ENCODE measurements at regions of chr16 and their contacts with region 1.

Region 1: DNA sequence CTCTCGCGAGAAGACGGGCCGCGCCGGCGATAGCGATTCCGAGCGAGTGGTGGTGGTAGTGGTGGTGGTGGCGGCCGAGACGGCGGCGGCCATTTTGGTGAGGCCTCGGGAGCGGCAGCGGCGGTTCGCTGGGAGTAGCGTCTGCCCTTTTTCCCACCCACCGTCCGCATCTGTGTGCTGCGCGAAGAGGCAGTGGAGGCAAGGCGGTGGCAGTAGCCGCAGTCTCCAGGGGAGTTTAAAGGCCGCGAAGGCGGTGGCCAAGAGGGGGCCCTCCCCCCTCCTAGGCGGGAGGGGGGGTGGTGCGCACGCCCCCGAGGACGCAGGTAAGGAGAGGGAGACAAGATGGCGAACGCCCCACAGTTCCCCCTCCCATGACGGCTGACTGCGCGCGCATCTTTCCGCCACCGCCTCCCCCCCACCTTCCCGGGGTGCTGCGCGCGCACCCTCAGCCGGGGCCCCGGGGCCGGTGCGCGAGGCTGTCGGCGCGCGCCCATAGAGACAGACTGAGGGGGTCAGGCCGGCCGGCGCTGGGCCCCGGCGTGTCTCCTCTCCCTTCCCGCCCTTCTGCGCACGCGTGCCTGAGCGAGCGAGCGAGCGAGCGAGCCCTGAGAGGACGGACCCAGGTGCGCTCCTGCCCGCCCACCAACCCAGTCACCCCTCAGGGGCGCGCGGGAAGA is 694 bp upstream of the SRCAP start:
- DNase-seq: peak; percentile 100
- H3K4me3 Mint-ChIP-seq: peak overlapping the region; percentile 94
- H3K27ac Mint-ChIP-seq: peak overlapping the region; percentile 99
- H3K4me1 Mint-ChIP-seq: peaks cover 37% of the 10 kb centered on the region
- H3K27me3 Mint-ChIP-seq: no peaks in the 10 kb centered on the region

Region 2: DNA sequence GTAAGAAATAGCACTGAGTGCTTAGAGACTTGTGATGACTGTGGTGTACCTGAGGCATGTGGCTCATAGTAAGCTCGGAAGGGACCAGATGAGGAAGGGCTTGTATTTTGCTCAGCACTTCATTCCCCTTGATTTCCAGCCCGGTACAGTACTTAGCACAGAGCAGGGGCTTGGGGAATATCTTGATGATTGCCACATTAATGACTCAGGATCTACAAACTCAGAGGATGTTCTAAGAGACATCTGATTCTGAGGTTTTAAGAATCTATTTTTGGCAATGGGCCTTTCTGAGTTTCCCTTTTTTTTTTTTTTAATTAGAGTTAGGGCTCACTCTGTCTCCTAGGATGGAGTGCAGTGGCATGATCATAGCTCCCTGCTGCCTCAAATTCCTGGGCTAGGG is 788.9 kb before region 1 on chr16:
- CTCF ChIA-PET with region 1: no interaction called
- intact Hi-C with region 1: no loop called
- DNase-seq: no peak
- H3K4me3 Mint-ChIP-seq: no peak overlapping the region
- H3K27ac Mint-ChIP-seq: no peak overlapping the region
- H3K4me1 Mint-ChIP-seq: no peaks in the 10 kb centered on the region
- H3K27me3 Mint-ChIP-seq: no peaks in the 10 kb centered on the region

Region 3: DNA sequence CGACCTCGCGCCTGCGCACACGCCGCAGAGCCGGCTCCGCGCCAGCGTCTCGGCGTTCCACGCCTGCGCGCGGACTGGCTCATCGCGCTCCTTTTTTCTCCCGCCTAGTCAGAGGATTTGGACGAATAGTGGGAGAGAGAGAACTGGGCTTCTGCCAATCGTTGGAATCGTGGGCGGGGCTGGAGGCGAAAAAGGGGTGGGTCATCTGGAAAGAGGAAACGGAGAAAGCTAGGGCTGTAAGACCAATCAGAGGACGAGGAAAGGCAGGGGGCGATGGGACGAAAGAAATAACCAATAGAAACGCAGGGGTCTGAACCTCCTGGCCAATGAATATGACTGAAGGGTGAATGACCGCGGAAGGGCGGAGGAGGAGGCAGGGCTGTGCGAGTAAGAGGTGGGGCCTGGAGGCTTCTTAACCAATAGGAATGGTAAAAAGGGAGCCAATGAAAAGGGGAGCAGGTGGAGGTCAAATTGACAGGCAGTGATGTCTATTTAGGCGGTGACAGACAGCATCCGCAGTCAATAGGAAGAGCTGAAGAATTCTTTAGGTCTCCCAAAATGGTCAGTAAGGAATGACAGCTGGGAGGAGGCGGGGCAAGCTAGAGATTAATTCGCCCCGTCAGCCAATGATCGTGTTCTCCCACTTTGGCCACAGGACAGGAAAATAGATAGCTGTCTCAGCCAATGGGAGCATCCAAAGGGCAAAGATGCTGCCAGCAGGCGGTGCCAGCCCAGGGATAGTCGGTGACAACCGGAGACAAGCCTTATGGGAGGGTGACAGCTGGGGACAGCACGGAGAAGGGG is 327.6 kb before region 1 on chr16 and contains the start of gene TBC1D10B:
- CTCF ChIA-PET with region 1: no interaction called
- intact Hi-C with region 1: loop called (anchors 2 kb)
- DNase-seq: peak; percentile 100
- H3K4me3 Mint-ChIP-seq: peak within 1 kb of the TSS; percentile 94
- H3K27ac Mint-ChIP-seq: peak within 1 kb of the TSS; percentile 98
- H3K4me1 Mint-ChIP-seq: peaks cover 40% of the 10 kb centered on the region
- H3K27me3 Mint-ChIP-seq: no peaks in the 10 kb centered on the region
- total RNA-seq, gene TBC1D10B: 36.6 to 38.4 TPM

Region 4: DNA sequence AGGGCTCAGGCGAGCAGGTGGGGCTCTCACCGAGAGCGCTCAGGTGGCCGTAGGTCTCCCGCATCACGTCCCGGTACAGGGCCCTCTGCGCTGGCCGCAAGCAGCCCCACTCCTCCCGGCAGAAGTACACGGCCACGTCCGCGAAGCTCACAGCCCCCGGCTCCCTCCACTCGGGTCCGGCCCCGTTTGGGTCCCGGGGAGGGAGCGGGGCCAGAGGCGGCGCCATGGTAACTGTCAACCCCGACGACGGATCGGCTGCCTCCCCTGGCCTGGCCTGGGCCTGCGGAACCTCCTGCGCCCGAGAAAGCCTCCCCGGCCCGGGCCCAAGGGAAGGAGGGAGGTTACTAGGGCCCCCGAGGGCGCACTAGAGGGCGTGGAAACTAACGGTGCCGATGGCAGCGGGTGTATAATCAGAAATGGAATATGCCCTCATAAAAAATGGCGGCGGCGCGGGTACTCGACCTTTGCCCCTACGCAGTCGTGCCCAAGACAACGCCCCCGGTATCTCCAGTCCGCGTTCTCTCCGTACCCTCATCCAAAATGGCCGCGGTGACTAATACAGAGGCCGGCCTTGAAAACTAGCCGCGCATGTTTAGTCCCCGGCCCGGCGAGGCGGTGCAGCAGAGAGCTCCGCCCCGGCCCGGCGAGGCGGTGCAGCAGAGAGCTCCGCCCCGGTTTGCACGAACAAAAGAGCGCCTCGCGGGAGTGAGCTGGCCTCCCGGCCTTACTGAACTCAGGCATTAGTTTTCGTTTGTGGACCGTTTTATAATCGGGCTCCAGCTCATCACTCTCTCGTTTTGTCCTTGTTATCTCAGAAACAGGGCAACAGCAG is 140.1 kb before region 1 on chr16 and contains the start of gene ZNF764:
- CTCF ChIA-PET with region 1: interaction called, 6 read pairs
- intact Hi-C with region 1: loop called (anchors 10 kb)
- DNase-seq: peak; percentile 99
- H3K4me3 Mint-ChIP-seq: peak within 1 kb of the TSS; percentile 84
- H3K27ac Mint-ChIP-seq: peak within 1 kb of the TSS; percentile 90
- H3K4me1 Mint-ChIP-seq: peaks cover 34% of the 10 kb centered on the region
- H3K27me3 Mint-ChIP-seq: no peaks in the 10 kb centered on the region
- total RNA-seq, gene ZNF764: 7.6 to 9.5 TPM

Region 5: DNA sequence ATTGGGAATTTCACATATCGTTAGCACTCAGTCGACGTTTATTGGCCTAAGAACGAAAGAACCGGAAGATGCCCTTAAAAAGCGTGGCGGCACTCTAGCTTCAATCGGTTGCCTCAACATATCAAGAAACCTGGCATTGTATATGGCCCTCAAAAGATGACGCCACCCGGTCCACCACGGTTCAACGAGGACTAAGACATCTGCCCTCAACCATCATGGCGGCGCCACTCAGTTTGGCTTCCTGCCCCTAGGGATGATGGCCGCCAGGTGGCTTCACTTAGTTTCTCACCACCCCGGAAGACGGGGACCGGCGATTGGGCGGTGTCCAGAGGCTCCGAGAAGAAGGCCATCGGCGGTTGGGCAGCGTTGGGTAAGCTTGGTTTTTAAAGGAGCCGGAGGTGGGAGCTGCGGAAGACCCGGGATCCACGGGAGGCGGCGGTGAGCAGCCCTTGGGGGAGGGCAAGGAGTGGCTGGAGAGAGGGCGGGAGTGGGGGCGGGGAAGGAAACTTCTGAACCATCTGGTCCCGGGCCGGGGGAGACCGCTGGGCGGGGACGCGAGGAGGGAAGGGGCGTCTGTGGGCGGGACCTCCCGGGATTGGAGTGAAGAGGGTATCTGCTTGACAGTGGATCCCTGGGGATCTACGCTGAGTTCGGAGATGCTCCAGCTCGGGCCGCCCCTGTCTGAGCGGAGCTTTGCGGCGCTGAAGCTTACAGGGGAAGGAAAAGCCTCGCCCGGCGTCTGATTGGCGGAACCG is 47.7 kb before region 1 on chr16 and contains the start of gene PRR14:
- CTCF ChIA-PET with region 1: interaction called, 17 read pairs
- intact Hi-C with region 1: loop called (anchors 1 kb)
- DNase-seq: peak; percentile 100
- H3K4me3 Mint-ChIP-seq: peak within 1 kb of the TSS; percentile 85
- H3K27ac Mint-ChIP-seq: peak within 1 kb of the TSS; percentile 91
- H3K4me1 Mint-ChIP-seq: peaks cover 22% of the 10 kb centered on the region
- H3K27me3 Mint-ChIP-seq: no peaks in the 10 kb centered on the region
- total RNA-seq, gene PRR14: 50.6 to 52.4 TPM

Region 6: DNA sequence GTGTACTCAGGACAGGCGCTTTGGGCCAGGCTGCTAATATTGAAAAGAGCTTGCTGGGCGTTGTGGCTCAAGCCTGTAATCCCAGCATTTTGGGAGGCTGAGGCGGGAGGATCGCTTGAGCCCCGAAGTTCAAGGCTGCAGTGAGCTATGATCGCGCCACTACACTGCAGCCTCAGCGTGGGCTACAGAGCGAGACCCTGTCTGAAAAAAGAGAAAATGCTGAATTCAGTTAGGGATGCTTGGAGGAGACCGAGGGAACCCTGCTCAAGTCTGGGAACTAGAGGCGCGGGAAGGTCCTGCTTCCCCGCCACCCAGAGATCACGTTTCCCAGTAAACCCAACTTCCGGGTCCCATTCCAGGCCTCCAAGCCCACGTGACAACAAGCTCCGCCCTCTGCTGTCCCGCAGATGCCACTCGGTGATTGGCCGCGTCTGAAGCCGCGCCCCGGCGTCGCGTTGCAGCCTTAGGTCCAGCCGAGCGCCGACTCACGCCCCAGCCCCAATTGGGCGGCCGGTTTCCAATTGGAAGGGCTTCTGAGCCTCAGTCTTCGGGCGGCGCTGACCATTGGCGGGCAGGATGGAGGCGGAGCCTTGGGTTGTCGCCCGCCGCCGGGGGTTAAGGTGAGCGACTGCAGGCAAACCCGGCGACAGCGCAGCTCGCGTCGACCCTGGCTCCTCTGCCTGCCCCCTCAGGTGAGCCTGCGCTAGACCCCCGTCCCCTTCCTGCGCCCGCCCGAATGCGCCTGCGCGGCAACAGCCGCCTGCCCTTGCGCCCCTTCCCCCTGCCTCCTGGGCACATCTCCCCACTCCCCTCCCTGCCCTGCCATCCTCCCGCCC is 49.7 kb after region 1 on chr16 and contains the start of gene PHKG2:
- CTCF ChIA-PET with region 1: no interaction called
- intact Hi-C with region 1: loop called (anchors 1 kb)
- DNase-seq: peak; percentile 99
- H3K4me3 Mint-ChIP-seq: peak within 1 kb of the TSS; percentile 89
- H3K27ac Mint-ChIP-seq: peak within 1 kb of the TSS; percentile 86
- H3K4me1 Mint-ChIP-seq: peaks cover 19% of the 10 kb centered on the region
- H3K27me3 Mint-ChIP-seq: no peaks in the 10 kb centered on the region
- total RNA-seq, gene PHKG2: 23.3 to 26.4 TPM

Region 7: DNA sequence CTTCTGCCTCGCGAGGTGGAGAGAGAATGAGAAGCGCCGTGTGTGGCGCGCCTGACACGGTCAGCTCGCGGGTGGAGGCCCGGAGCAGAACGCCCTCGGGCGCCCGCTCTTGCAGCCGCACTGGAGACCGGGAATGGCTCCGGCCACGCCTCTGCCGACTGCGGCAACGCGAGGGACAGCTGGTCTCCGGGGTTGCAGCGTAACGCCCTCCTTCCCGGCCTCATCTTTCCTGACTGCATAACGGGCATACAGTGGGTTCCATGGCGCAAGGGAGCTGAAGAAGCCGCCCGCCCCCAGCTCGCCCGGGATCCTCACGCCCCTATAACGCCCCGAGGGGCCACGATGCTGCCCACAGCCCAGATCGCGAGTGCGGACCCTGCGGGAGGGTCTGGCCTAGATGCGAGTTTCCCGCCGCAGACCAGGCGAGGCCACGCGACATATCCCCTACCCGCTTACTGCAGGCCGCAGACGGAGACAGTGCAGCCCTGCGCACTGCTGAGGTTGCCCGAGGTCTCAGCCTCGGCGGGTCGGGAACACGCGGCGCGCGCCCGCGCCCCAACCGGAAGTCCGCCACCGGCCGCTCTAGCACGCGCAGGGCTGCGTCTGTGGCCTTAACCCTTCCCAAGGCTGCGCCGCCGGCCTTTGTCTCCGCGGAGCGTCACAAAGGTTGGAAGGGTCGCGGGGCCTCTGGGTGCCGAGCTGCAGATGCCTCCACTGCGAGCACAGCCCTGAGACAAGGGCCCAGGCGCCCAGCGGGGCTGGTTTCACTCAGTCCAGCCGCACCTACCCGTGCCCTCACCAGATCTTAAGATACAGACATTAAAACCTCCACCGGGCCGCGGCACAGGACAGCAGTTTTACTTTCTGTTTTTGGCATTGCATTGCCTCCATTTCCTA is 176.8 kb after region 1 on chr16:
- CTCF ChIA-PET with region 1: no interaction called
- intact Hi-C with region 1: loop called (anchors 2 kb)
- DNase-seq: peak; percentile 90
- H3K4me3 Mint-ChIP-seq: peak overlapping the region; percentile 92
- H3K27ac Mint-ChIP-seq: peak overlapping the region; percentile 96
- H3K4me1 Mint-ChIP-seq: peaks cover 40% of the 10 kb centered on the region
- H3K27me3 Mint-ChIP-seq: no peaks in the 10 kb centered on the region